Dorsolateral prefrontal cortex (tissue), 120 donors: ENCODE measurements at regions of chr2 and their contacts with region 1.

Region 1: GRCh38 chr2:26345545-26346453 is at the start of gene SELENOI:
- DNase-seq: peak; percentile 97 to 100 (median 99)
- H3K4me3 ChIP-seq: peak within 1 kb of the TSS; percentile 68 to 99 (median 93)
- H3K27ac ChIP-seq: peak within 1 kb of the TSS; percentile 58 to 97 (median 92)
- H3K27me3 ChIP-seq: no peaks in the 10 kb centered on the region
- CTCF ChIP-seq: peak in 22 of 56 donors; percentile 0 to 35 (median 24)
- total RNA-seq, gene SELENOI: 25.9 to 83.9 (median 61.6) TPM

Region 2: GRCh38 chr2:26640331-26640745 is 294.5 kb after region 1 on chr2:
- intact Hi-C with region 1: no loop called
- DNase-seq: peak in 1 of 10 donors; percentile 30
- H3K4me3 ChIP-seq: no peak overlapping the region
- H3K27ac ChIP-seq: no peak overlapping the region
- H3K27me3 ChIP-seq: peaks cover 0 to 12% (median 0%) of the 10 kb centered on the region in 45 donors
- CTCF ChIP-seq: no peak

Region 3: DNA sequence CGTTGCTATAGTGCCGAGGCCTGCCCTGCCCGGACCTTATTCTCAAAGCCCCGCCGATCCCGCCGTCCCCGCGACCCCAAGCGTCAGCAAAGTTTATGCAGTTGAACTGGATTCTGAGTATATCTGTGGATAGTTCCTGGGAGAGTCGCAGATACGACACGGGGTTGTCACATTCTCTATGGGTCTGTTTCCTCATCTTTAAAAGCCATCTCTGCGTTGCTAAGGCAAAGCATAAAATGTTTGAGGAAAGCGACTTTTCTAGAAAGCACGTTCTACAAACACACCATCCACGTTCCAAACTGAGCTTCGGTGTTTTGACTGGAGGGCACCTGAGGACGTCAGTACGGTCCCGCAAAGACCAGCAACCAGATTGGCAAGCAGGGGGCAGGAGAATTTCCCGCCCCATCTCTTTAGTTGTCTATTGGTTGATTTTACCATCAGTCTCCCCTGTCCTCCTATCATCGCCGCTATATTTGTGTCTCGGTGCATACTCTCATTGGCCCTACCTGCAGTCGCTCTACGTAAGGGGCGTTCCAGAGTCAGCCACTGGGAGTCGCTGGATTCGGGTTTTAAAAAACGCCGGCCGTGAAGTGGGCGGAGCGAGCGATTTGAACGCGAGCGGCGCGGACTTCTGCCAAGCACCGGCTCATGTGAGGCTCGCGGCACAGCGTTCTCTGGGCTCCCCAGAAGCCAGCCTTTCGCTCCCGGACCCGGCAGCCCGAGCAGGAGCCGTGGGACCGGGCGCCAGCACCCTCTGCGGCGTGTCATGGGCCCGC is 439.8 kb after region 1 on chr2 and contains the start of gene CENPA:
- intact Hi-C with region 1: loop called in 1 of 2 experiments (anchors 10 kb)
- DNase-seq: peak; percentile 87 to 97 (median 96)
- H3K4me3 ChIP-seq: peak within 1 kb of the TSS; percentile 51 to 91 (median 74)
- H3K27ac ChIP-seq: peak within 1 kb of the TSS in 32 of 59 donors; percentile 2 to 76 (median 40)
- H3K27me3 ChIP-seq: peaks cover 0 to 8% (median 0%) of the 10 kb centered on the region in 45 donors
- CTCF ChIP-seq: peak in 54 of 56 donors; percentile 33 to 77 (median 60)
- total RNA-seq, gene CENPA: 0.29 to 1.2 (median 0.48) TPM in 18 of 120 experiments, not detected in the others